Heart left ventricle (tissue), 16 donors: ENCODE measurements at regions of chr2 and their contacts with region 1.

Region 1: DNA sequence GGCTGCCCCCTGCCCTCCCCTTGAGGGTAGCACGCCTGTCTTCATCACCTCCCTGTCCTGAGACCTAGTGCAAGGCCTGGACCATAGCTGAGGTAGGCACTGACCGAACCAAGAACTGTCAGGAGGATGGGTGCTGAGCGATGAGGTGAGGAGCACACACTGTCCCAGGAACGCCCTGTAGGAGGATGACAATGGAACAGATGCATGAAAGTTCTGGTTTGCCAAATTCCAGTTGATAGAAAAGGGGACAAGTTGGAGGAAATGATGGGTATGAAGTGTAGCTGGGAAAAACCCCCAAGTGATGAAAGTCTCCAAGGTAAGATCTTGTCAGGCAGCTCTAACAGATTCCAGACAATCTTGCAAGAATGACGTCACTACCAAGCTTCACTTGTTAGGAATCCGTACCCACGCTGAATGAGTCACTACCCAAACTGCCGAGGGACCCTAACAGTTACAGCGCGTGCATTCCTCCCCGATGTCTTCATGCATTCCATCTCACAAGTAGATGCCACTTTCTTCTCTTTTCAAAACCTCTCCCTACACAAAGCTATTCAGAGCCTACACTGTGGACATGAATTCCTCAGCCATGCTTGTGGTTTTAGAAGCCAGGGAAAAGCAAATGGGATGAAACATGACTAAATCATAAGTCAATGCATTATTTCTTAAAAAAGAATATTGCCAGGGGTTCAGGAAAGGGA is 27.6 kb downstream of the MRPL33 start:
- DNase-seq: peak in 4 of 5 donors; percentile 38 to 84 (median 56)
- ATAC-seq: peak; percentile 30 to 72 (median 56)
- H3K4me3 ChIP-seq: no peak overlapping the region
- H3K27ac ChIP-seq: peak overlapping the region; percentile 43 to 98 (median 88)
- H3K4me1 ChIP-seq: peaks cover 5 to 64% (median 48%) of the 10 kb centered on the region in 12 donors
- H3K27me3 ChIP-seq: no peaks in the 10 kb centered on the region
- CTCF ChIP-seq: no peak
- POLR2A ChIP-seq: no peak

Region 2: DNA sequence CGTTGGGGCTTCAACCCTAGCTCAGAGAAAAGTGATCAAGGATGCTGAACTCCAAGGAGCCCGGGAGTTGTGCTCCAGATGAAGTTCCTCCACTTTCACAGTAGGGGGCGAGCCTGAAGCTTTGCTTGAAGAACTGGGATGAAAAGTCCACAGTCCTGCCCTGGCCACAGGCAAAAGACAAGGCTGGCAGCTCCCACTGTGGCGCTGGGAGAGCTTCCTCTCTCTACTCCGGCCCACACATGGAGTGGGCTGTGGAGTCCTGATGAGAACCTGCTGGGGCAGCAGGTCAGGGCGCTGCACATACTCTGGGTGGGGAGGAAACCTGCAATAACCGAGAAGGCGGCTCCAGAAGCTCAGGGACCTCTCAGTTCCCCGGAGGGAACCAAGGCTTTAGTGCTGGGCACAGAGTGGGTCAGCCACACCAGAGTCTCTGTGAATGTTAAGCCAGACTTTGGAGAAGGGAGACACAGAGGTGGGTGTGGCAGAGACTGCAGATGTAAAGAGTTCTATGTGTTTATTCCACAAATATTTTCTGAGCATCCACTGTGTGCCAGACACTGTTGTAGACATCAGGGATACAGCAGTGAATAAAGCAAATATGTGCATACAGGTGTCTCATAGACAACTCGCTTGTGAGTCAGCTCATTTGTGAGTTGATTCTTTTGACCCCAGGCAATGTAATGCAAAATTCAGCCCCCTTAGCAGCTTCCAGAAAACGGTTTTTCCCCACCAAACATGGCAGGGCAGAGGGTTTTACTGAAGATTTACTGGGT is 75.5 kb before region 1 on chr2:
- intact Hi-C with region 1: loop called in 1 of 10 experiments (anchors 5 kb)
- DNase-seq: peak; percentile 68 to 78 (median 73)
- ATAC-seq: peak; percentile 41 to 71 (median 64)
- H3K4me3 ChIP-seq: no peak overlapping the region
- H3K27ac ChIP-seq: peak overlapping the region; percentile 6 to 94 (median 72)
- H3K4me1 ChIP-seq: peaks cover 0 to 59% (median 37%) of the 10 kb centered on the region in 12 donors
- H3K27me3 ChIP-seq: no peaks in the 10 kb centered on the region
- CTCF ChIP-seq: peak; percentile 63 to 91 (median 85)
- POLR2A ChIP-seq: no peak

Region 3: DNA sequence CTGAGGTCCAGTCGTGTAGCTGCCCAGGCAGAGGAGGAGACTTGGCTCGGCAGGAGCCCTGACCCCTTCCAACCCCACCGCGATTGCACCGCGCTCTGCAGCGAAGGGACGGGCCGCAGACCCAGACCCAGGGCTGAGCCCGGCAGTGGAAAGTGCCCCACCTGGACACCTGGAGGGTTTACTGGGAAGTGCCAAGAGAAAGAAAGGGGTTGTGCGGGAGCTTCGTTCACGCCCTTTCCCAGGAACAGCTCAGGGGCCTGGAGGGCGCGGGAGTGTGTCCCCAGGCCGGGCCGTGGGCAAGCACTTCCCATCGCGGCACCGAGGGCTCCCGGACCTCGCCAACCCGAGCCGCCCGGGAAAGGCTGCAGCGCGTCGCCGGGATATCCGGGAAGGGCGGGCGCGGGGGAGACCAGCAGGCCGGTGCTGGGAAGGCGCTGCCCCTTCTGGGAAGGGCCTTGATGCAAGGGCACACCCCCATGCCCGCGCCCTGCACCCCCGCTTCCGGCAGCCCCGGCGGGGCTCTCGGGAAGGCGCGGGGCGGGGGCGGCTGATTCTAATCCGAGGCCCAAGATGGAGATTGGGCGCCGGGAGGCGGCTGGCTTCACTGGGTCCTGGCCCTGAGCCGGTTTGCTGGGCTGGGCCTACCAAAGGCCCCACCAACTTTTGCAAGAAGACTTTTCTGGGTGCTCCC is 63.7 kb before region 1 on chr2:
- intact Hi-C with region 1: loop called in 1 of 10 experiments (anchors 5 kb)
- DNase-seq: peak; percentile 87 to 95 (median 89)
- ATAC-seq: peak; percentile 74 to 96 (median 94)
- H3K4me3 ChIP-seq: peak overlapping the region; percentile 29 to 68 (median 56)
- H3K27ac ChIP-seq: peak overlapping the region; percentile 60 to 94 (median 86)
- H3K4me1 ChIP-seq: peaks cover 14 to 47% (median 35%) of the 10 kb centered on the region in 12 donors
- H3K27me3 ChIP-seq: no peaks in the 10 kb centered on the region
- CTCF ChIP-seq: peak in 1 of 12 donors; percentile 16
- POLR2A ChIP-seq: peak in 1 of 2 donors; percentile 61

Region 4: GRCh38 chr2:27771548-27772335 is 27.4 kb before region 1 on chr2 and contains the start of gene MRPL33:
- intact Hi-C with region 1: loop called in 2 of 10 experiments (anchors 2 kb)
- DNase-seq: peak; percentile 96 to 98 (median 96)
- ATAC-seq: peak; percentile 95 to 98 (median 98)
- H3K4me3 ChIP-seq: peak within 1 kb of the TSS; percentile 56 to 89 (median 76)
- H3K27ac ChIP-seq: peak within 1 kb of the TSS; percentile 88 to 97 (median 92)
- H3K4me1 ChIP-seq: peaks cover 4 to 50% (median 37%) of the 10 kb centered on the region in 12 donors
- H3K27me3 ChIP-seq: no peaks in the 10 kb centered on the region
- CTCF ChIP-seq: no peak
- POLR2A ChIP-seq: peak in 1 of 2 donors; percentile 61
- total RNA-seq, gene MRPL33: 163 to 503 (median 305) TPM